ENCODE measurements at regions of chr17 and their contacts with region 1.

Region 1: GRCh38 chr17:4934173-4934979 is 2.3 kb downstream of the GP1BA start:
- DNase-seq: no peak
- H3K4me3 ChIP-seq: no peak overlapping the region
- H3K27ac ChIP-seq: no peak overlapping the region
- H3K4me1 ChIP-seq: peaks cover 0 to 8% (median 6%) of the 10 kb centered on the region in 4 experiments; a peak in 6 of 7 replicates
- H3K27me3 ChIP-seq: no peaks in the 10 kb centered on the region
- CTCF ChIP-seq: peak; percentile 15 to 55 (median 51)
- EP300 ChIP-seq: no peak
- POLR2A ChIP-seq: no peak
- RAD21 ChIP-seq: peak; percentile 25 to 52; a peak in 3 of 4 replicates

Region 2: GRCh38 chr17:4920351-4921048 is 13.9 kb before region 1 on chr17:
- CTCF ChIA-PET with region 1: interaction called, 7 read pairs
- POLR2A ChIA-PET with region 1: interaction called, 55 read pairs
- DNase-seq: no peak
- H3K4me3 ChIP-seq: no peak overlapping the region
- H3K27ac ChIP-seq: no peak overlapping the region
- H3K4me1 ChIP-seq: peaks cover 0 to 5% (median 1%) of the 10 kb centered on the region in 4 experiments; a peak in 2 of 7 replicates
- H3K27me3 ChIP-seq: no peaks in the 10 kb centered on the region
- CTCF ChIP-seq: no peak
- EP300 ChIP-seq: no peak
- POLR2A ChIP-seq: no peak
- RAD21 ChIP-seq: no peak